ENCODE measurements at regions of chr2 and their contacts with region 1.

Region 1: DNA sequence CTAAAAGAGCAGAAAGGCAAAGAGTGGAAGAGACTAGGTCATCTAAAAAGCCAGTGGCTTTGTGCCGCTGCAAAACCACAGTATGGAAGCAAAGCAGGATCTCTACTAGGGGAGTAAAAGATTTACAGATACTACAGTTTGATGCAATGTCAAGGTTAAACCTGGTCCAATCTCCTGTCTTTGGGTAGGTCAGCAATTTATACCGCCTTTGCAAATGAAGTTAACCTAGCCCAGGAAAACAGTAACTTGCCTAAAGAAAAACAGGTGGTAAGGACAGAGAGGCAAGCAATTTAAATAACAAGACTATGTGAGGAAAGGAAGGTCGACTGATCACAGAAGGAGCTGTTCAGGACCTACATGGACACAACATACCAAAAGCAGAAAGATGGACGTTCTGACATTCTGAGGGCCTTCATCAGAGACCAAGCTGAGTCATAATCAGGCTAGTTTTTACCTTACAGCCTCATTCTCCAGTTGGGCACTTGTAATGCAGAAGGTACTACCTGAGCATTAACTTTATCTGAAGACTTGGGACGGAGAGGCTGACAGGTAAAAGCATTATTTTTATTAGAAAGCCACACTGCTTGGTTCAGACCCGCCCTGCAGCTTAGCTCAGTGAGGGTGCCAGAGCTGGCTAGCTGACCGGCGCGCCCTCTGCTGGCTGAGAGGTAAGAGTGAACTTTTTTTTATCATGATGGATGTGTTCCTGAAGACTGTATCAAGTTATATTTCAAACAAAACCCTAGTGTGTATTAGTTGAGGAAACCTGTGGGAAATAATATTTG is 15.9 kb downstream of the CDKL4 start:
- DNase-seq: peak; percentile 78 to 82
- H3K4me3 ChIP-seq: no peak overlapping the region
- H3K27ac ChIP-seq: no peak overlapping the region
- H3K4me1 ChIP-seq: peaks cover 0 to 5% of the 10 kb centered on the region in 2 donors
- H3K27me3 ChIP-seq: no peaks in the 10 kb centered on the region
- CTCF ChIP-seq: peak; percentile 63 to 86 (median 80)
- POLR2A ChIP-seq: no peak

Region 2: DNA sequence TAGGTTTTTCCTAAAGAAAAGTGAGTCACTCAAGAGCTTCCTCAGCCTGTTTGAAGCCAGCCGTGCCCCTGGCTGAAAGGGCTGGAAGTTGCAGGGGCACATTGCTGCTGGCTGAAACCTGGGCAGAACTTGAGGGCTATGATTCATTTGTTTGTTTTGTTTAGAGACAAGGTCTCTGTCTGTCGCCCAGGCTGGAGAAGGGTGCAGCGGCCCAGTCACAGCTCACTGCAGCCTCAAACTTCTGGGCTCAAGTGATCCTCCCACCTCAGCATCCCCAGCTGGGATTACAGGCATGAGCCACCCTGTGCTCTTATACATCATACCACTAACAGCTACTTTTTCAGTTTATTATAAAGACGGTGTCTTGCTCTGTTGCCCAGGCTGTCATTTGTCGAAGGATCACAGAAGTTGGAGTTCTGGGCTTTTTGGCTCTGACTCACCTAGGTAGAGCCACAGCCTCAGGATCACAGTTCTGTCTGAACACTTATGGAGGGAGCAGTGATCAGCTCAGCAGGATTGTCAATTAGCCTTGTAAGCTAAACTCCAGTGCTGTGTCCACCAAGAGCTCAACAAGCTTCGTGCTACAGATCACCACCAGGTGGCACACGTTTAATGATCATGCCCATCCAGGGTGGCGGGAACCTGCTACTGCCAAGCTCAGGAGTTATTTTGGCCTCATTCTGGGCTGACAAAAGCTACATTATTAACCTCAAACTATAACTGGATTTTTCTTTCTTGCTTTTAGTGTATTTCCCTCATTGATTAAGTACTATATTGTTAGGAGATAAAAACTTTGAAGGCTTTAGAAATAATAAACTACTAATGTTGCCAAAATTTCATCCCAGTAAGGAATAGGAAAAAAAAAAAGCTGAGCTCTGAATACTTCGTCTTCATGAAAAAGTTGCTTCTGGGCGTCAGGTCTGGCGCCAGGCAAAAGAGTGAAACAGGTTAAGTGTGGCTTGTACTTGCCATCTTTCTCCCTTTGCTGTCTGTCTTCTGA is 280.3 kb before region 1 on chr2:
- intact Hi-C with region 1: loop called (anchors 10 kb)
- DNase-seq: peak; percentile 86 to 90
- H3K4me3 ChIP-seq: no peak overlapping the region
- H3K27ac ChIP-seq: peak overlapping the region in 1 of 3 donors; percentile 21
- H3K4me1 ChIP-seq: peaks cover 9 to 10% of the 10 kb centered on the region in 2 donors
- H3K27me3 ChIP-seq: no peaks in the 10 kb centered on the region
- CTCF ChIP-seq: peak; percentile 37 to 78 (median 68)
- POLR2A ChIP-seq: no peak

Region 3: DNA sequence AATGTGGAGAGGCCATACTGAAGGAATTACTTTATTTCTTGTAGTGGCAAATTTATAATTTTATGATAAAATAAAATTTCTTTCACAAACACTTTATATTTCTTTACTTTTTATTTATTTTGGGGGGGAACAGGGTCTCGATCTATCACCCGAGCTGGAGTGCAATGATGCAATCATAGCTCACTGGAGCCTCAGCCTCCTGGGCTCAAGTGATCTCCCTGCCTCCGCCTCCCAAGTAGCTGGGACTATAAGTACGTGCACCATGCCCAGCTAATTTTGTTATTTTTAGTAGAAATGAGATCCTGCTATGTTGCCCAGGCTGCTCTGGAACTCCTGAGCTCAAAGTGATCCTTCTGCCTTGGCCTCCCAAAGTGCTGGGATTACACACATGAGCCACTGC is 166.5 kb before region 1 on chr2:
- intact Hi-C with region 1: loop called (anchors 2 kb)
- DNase-seq: no peak
- H3K4me3 ChIP-seq: no peak overlapping the region
- H3K27ac ChIP-seq: no peak overlapping the region
- H3K4me1 ChIP-seq: no peaks in the 10 kb centered on the region
- H3K27me3 ChIP-seq: no peaks in the 10 kb centered on the region
- CTCF ChIP-seq: no peak
- POLR2A ChIP-seq: no peak